GM10248 (cell line): ENCODE measurements at regions of chr1 and their contacts with region 1.

Region 1: GRCh38 chr1:157580179-157580827 is 17.6 kb downstream of the FCRL4 start:
- DNase-seq: peak; percentile 64
- CTCF ChIP-seq: peak; percentile 71

Region 2: DNA sequence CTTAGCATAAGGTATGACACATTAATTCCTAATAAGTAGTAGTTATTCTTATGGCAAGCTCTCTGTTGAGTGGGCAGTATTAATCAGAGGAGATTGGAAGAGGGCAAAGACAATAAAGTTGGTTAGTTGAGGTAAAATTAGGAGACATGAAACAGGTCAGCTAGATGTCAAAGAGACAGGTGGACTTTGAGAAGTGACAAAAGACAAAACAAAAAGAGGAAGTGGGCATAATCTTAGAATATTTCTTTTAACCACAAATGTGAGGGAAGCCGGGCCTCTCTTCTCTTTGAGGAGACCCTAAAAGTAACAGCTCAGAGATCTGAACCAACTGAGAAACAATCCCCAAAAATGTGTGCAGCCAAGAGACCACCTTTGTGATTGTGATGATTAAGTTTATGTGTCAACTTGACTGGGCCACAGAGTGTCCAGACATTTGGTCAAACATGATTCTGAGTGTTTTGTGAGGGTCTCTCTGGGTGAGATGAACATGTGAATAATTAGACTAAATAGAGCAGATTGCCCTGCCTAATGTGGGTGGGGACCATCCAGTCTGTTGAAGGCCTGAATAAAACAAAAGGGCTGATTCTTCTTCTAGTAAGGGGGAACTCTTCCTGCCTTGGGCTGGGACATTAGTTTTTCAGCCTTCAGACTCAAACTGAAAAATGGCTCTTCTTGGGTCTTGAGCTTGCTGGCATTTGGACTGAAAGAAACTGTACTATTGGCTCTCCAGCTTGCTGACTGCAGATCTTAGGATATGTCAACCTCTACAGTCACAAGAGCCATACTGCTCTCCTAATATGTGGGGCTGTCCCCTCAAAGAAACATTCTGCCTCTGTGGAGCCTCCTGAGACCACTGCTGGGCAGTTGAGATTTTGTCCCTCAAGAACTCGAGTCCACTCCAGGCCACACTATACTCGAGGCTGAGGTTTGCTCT is 68.0 kb before region 1 on chr1:
- CTCF ChIA-PET with region 1: interaction called, 14 read pairs
- POLR2A ChIA-PET with region 1: no interaction called
- DNase-seq: peak; percentile 57
- CTCF ChIP-seq: no peak

Region 3: DNA sequence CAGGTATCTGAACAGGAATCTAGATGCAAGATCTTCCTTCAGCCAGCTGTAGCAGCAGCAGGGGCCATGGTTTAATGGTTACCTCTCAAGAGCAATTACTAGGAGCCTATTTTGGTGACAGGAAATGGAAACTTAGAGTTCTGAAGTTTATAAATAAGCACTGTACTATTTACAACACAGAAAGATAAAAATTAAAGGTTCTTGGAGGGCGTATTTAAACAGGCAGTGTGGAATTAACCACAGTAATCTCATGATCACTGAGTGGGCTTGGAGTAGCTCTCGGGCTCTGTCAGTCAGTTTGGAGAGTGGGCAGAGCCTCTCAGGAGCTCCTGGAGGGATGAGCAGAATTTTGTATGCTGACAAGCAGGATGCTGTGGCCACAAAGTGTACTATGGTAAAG is 17.8 kb before region 1 on chr1:
- CTCF ChIA-PET with region 1: interaction called, 34 read pairs
- POLR2A ChIA-PET with region 1: no interaction called
- DNase-seq: peak; percentile 41
- CTCF ChIP-seq: no peak

Region 4: GRCh38 chr1:157626099-157626498 is 45.8 kb after region 1 on chr1:
- CTCF ChIA-PET with region 1: interaction called, 34 read pairs
- POLR2A ChIA-PET with region 1: no interaction called
- DNase-seq: peak; percentile 60
- CTCF ChIP-seq: peak; percentile 71

Region 5: DNA sequence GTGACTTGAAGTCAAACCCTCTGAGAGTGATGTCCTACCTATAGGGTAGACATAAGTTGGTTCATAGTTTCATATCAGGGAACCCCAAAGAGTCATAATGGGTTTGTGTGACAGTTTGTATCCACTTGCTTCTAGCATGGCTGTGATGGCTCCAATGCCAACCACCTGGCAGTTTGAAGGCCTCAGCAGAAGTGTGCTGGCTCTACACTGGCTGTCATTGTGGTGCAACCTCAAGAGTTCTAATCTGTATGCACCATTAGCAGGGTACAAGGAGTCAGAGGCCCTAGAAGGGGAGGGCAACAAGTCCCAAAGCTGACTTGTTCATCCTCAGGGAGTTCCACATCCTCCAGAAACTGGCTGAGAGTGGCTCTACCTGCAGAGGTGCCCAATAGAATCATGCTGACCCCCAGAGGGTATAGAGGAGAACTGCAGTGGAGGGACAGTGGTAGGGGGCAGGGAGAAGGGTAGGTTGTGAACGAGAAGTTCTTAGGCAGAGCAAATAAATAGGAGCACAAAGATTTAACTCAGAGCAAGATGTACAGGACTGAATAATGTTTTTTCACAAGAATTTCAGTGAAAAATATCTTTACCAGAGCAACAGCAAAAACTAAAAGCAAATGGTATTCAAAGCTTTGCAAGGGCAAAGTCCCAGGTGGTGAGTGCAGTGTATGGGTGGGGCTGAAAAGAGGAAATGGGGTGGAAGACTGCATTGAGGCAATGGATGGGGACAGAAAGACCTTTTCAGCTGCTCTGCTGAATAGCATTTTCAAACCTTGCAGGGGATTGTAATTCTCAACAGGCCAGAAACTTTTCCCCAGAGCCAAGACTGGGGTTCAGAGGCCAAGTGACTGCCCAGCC is 193.4 kb after region 1 on chr1:
- CTCF ChIA-PET with region 1: interaction called, 11 read pairs
- POLR2A ChIA-PET with region 1: no interaction called
- DNase-seq: peak; percentile 59
- CTCF ChIP-seq: peak; percentile 56